Activated CD4-positive, alpha-beta memory T cell treated with anti-CD3 and anti-CD28 coated beads for 36 hours (primary cell): ENCODE measurements at regions of chr7 and their contacts with region 1.

Region 1: DNA sequence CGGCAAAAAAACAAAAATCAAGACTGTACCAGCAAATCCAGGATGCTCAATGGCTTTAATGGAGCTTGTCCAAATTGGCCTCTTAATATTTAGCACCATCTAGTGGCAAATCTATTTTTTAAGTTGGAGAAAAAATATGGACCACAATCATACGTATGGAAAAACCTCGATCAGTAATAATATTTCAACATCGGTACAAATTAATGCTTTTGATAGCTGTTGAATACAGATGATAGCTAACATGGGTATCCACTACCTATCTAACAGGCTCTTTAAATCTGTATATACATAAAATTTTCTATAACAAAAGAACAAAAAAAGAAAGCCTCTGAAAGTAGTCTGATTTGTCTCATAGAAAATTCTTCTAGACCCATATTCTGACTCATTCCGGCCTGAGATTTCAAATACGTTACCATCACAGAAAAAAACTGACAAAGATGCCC is 29.2 kb downstream of the COA1 start:
- DNase-seq: no peak
- H3K4me3 Mint-ChIP-seq: no peak overlapping the region
- H3K27ac Mint-ChIP-seq: no peak overlapping the region
- H3K4me1 Mint-ChIP-seq: peaks cover 57% of the 10 kb centered on the region
- H3K27me3 Mint-ChIP-seq: no peaks in the 10 kb centered on the region

Region 2: DNA sequence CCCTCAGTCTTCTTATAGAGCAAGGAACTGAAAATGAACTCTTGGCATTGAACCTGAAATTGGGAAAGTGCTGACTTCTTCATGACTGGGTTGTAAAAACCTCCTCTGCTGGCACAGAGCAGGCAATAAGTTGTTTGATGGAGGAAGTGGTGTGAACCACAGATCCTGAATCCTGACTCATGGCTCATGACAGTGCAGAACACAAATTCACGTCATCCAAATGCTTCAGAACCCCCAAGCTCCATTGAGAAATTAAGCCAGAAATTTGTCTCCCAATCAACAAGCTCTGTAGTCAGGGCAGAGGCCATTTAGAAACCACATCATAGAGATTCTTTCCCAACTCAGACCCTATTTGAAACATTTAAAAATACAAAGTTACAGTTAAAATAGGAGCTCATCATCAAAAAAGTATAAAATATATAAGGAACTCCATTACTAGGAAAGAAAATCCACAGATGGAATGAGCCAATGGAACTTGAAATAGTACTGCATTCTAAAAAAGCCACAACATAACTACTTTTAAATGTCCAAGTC is 127.5 kb before region 1 on chr7:
- CTCF ChIA-PET with region 1: interaction called, 548 read pairs
- POLR2A ChIA-PET with region 1: no interaction called
- intact Hi-C with region 1: no loop called
- DNase-seq: peak; percentile 67
- H3K4me3 Mint-ChIP-seq: no peak overlapping the region
- H3K27ac Mint-ChIP-seq: peak overlapping the region; percentile 44
- H3K4me1 Mint-ChIP-seq: peaks cover 26% of the 10 kb centered on the region
- H3K27me3 Mint-ChIP-seq: no peaks in the 10 kb centered on the region

Region 3: GRCh38 chr7:43612599-43613589 is 87.2 kb before region 1 on chr7:
- CTCF ChIA-PET with region 1: interaction called, 17 read pairs
- POLR2A ChIA-PET with region 1: interaction called, 5 read pairs
- intact Hi-C with region 1: no loop called
- DNase-seq: peak; percentile 33
- H3K4me3 Mint-ChIP-seq: peak overlapping the region; percentile 43
- H3K27ac Mint-ChIP-seq: peak overlapping the region; percentile 83
- H3K4me1 Mint-ChIP-seq: peaks cover 58% of the 10 kb centered on the region
- H3K27me3 Mint-ChIP-seq: no peaks in the 10 kb centered on the region

Region 4: GRCh38 chr7:43631559-43631958 is 68.5 kb before region 1 on chr7:
- CTCF ChIA-PET with region 1: interaction called, 14 read pairs
- POLR2A ChIA-PET with region 1: no interaction called
- intact Hi-C with region 1: no loop called
- DNase-seq: no peak
- H3K4me3 Mint-ChIP-seq: no peak overlapping the region
- H3K27ac Mint-ChIP-seq: peak overlapping the region; percentile 60
- H3K4me1 Mint-ChIP-seq: peaks cover 78% of the 10 kb centered on the region
- H3K27me3 Mint-ChIP-seq: no peaks in the 10 kb centered on the region

Region 5: DNA sequence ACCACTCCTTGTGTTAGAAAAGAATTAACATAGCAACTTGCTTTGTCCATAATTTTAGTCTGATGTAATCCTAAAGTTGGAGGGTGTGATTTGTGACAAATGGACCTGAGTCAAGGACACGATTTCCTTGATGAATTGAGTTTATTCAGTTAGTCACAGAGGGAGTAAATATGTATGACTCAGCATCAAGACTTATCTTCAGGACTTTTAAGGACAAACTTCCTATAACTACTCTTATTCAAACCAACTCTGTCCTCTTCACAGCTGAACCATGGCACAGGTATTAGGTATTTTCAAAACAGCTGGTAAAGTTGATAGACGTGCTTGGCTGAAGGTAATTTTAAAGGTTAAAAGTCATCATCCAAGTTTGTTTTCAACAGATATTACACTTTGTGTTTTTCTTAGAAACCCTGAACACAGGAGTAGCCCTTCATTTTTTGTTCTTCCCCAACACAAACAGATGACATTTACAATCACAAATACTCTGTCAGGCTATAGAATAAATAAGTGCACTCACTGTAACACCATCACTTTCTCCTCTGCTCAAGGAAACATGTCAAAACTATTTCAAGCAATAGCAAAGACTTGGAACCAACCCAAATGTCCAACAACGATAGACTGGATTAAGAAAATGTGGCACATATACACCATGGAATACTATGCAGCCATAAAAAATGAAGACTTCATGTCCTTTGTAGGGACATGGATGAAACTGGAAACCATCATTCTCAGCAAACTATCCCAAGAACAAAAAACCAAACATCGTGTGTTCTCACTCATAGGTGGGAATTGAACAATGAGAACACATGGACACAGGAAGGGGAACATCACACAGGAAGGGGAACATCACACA is 25.3 kb before region 1 on chr7:
- CTCF ChIA-PET with region 1: interaction called, 13 read pairs
- POLR2A ChIA-PET with region 1: interaction called, 6 read pairs
- intact Hi-C with region 1: no loop called
- DNase-seq: no peak
- H3K4me3 Mint-ChIP-seq: no peak overlapping the region
- H3K27ac Mint-ChIP-seq: peak overlapping the region; percentile 52
- H3K4me1 Mint-ChIP-seq: peaks cover 80% of the 10 kb centered on the region
- H3K27me3 Mint-ChIP-seq: no peaks in the 10 kb centered on the region

Region 6: DNA sequence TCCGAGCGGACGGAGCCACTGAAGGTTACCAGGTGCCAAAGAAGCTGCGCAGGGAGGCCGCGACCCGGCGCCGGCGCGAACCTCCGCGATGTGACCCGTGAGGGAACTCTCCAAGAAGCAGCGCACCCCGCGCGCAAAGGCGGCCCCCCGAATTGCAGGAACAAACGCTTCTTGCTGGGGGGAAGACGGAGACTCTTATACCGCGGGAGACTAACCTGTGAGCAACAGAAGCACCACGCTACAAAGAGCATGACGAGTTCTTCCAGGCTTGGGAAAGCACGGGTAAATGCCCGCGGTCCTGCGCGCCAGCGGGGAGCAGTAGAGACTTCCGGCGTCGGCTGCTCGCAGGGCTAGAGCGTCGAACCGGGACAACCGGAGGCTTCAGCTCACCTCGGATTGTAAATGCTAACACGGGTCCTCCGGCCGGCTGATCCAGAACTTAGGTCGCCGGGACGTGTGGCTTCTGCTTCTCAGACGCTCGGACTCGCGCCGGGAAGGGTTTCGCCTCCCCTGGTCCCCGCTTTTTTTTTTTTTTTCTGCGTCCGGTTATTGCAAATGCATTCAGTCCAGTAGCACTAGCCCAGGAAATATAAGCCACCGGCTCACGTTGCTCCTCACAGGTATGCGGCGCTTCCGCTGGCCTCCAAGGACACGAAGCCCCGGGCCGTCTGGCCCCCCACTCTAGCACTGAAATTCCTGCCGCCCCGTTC is 29.3 kb after region 1 on chr7 and contains the start of gene COA1:
- CTCF ChIA-PET with region 1: interaction called, 12 read pairs
- POLR2A ChIA-PET with region 1: no interaction called
- intact Hi-C with region 1: no loop called
- DNase-seq: peak; percentile 89
- H3K4me3 Mint-ChIP-seq: peak within 1 kb of the TSS; percentile 94
- H3K27ac Mint-ChIP-seq: peak within 1 kb of the TSS; percentile 79
- H3K4me1 Mint-ChIP-seq: peaks cover 32% of the 10 kb centered on the region
- H3K27me3 Mint-ChIP-seq: no peaks in the 10 kb centered on the region
- total RNA-seq, gene COA1: 78.9 to 79.6 TPM

Region 7: GRCh38 chr7:44145969-44146911 is 446.2 kb after region 1 on chr7:
- CTCF ChIA-PET with region 1: no interaction called
- POLR2A ChIA-PET with region 1: no interaction called
- intact Hi-C with region 1: no loop called
- DNase-seq: peak; percentile 83
- H3K4me3 Mint-ChIP-seq: peak overlapping the region; percentile 64
- H3K27ac Mint-ChIP-seq: no peak overlapping the region
- H3K4me1 Mint-ChIP-seq: peaks cover 6% of the 10 kb centered on the region
- H3K27me3 Mint-ChIP-seq: peaks cover 4% of the 10 kb centered on the region